ENCODE measurements at regions of chr1 and their contacts with region 1.

Region 1: GRCh38 chr1:28172713-28173150 is 3.8 kb downstream of the PTAFR start:
- DNase-seq: peak; percentile 47
- ATAC-seq: peak; percentile 66
- H3K4me3 Mint-ChIP-seq: peak overlapping the region; percentile 73
- H3K27ac Mint-ChIP-seq: peak overlapping the region; percentile 87
- H3K4me1 Mint-ChIP-seq: peaks cover 90% of the 10 kb centered on the region
- H3K27me3 Mint-ChIP-seq: no peaks in the 10 kb centered on the region
- CTCF ChIP-seq: no peak

Region 2: DNA sequence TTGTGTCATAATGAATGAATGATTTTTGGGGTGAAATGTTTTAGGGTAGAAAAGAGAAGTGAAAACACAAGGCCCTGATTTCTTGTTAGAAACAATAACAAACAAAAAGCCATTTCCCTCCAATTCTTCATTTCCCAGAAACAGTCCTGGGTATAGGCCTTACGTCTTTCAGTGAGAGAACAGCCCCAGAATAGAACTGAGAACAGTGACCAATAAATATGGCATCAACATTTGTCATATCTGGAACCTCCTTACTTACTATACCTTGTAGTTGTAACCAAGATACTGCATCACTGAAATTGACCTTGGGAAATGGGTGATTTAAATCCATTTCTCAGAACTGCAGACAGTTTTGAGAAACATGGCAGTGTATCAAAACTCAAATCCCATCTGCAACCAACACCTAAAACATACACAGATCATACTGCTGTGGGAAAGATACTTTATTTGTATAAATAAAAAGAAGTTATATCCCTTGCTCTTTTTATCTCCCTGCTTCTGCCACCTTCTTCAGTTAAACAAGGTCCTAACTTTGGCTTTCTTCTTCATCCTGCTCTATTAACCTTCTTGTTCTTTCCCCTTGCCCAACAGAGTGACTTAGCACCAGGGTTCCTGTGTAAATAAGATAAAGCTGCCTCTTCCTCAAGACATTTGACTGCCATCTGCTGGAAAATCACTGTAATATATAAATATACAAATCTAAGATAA is 193.4 kb before region 1 on chr1:
- CTCF ChIA-PET with region 1: no interaction called
- POLR2A ChIA-PET with region 1: no interaction called
- intact Hi-C with region 1: no loop called
- DNase-seq: no peak
- ATAC-seq: peak; percentile 68
- H3K4me3 Mint-ChIP-seq: no peak overlapping the region
- H3K27ac Mint-ChIP-seq: no peak overlapping the region
- H3K4me1 Mint-ChIP-seq: peaks cover 2% of the 10 kb centered on the region
- H3K27me3 Mint-ChIP-seq: no peaks in the 10 kb centered on the region
- CTCF ChIP-seq: peak; percentile 70

Region 3: GRCh38 chr1:28111157-28111556 is 61.6 kb before region 1 on chr1:
- CTCF ChIA-PET with region 1: no interaction called
- POLR2A ChIA-PET with region 1: interaction called, 5 read pairs
- intact Hi-C with region 1: loop called (anchors 2 kb)
- DNase-seq: no peak
- ATAC-seq: peak; percentile 80
- H3K4me3 Mint-ChIP-seq: peak overlapping the region; percentile 9
- H3K27ac Mint-ChIP-seq: peak overlapping the region; percentile 57
- H3K4me1 Mint-ChIP-seq: peaks cover 27% of the 10 kb centered on the region
- H3K27me3 Mint-ChIP-seq: no peaks in the 10 kb centered on the region
- CTCF ChIP-seq: no peak

Region 4: GRCh38 chr1:28135371-28136168 is 37.2 kb before region 1 on chr1:
- CTCF ChIA-PET with region 1: no interaction called
- POLR2A ChIA-PET with region 1: interaction called, 5 read pairs
- intact Hi-C with region 1: loop called (anchors 2 kb)
- DNase-seq: no peak
- ATAC-seq: peak; percentile 87
- H3K4me3 Mint-ChIP-seq: peak overlapping the region; percentile 66
- H3K27ac Mint-ChIP-seq: peak overlapping the region; percentile 74
- H3K4me1 Mint-ChIP-seq: peaks cover 63% of the 10 kb centered on the region
- H3K27me3 Mint-ChIP-seq: no peaks in the 10 kb centered on the region
- CTCF ChIP-seq: no peak

Region 5: GRCh38 chr1:28144203-28145135 is 28.3 kb before region 1 on chr1:
- CTCF ChIA-PET with region 1: interaction called, 5 read pairs
- POLR2A ChIA-PET with region 1: interaction called, 30 read pairs
- intact Hi-C with region 1: loop called (anchors 1 kb)
- DNase-seq: no peak
- ATAC-seq: peak; percentile 85
- H3K4me3 Mint-ChIP-seq: peak overlapping the region; percentile 29
- H3K27ac Mint-ChIP-seq: peak overlapping the region; percentile 78
- H3K4me1 Mint-ChIP-seq: peaks cover 49% of the 10 kb centered on the region
- H3K27me3 Mint-ChIP-seq: no peaks in the 10 kb centered on the region
- CTCF ChIP-seq: no peak

Region 6: GRCh38 chr1:28199328-28200233 is 26.8 kb after region 1 on chr1:
- CTCF ChIA-PET with region 1: interaction called, 4 read pairs
- POLR2A ChIA-PET with region 1: interaction called, 5 read pairs
- intact Hi-C with region 1: loop called (anchors 1 kb)
- DNase-seq: no peak
- ATAC-seq: peak; percentile 80
- H3K4me3 Mint-ChIP-seq: no peak overlapping the region
- H3K27ac Mint-ChIP-seq: peak overlapping the region; percentile 80
- H3K4me1 Mint-ChIP-seq: peaks cover 22% of the 10 kb centered on the region
- H3K27me3 Mint-ChIP-seq: no peaks in the 10 kb centered on the region
- CTCF ChIP-seq: no peak

Region 7: DNA sequence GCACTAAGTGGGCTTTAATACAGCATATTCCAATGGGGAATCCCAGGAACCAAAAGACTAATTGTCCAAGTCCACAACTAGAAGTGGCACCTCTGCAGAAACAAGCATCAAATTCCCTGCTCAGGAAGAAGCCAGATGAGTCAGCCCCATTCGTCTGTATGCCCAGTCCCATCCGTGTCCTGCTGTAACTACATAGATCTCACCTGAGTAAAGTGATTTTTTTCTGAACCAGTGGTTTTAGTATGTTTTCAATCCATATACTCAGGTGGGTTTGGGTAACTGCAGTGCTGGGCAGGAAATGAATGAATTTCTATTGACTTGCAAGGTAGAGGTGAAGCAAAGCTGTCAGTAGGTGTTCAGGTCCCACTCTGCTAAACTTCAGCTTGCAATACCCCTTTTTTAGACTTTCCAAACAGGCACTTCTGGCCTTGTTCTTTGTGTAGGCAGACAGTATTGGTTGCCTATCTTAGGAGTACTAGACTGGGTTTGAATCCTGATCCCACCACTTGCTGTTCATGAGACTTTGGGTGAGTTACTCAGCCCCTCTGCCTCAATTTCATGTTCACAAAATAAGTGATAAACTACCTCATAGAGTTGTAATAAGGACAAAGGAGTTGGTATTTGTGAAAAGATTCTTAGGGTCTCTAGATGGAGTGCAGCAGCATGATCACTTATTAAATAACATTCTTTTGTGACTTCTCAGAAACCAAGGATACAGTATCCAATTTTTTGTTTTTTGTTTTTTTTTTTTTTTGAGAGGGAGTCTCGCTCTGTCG is 338.1 kb after region 1 on chr1:
- CTCF ChIA-PET with region 1: no interaction called
- POLR2A ChIA-PET with region 1: interaction called, 13 read pairs
- intact Hi-C with region 1: no loop called
- DNase-seq: no peak
- ATAC-seq: peak; percentile 8
- H3K4me3 Mint-ChIP-seq: peak overlapping the region; percentile 98
- H3K27ac Mint-ChIP-seq: peak overlapping the region; percentile 98
- H3K4me1 Mint-ChIP-seq: peaks cover 44% of the 10 kb centered on the region
- H3K27me3 Mint-ChIP-seq: no peaks in the 10 kb centered on the region
- CTCF ChIP-seq: no peak

Measured in activated B cell treated with CpG ODN at 0.5 μM for 24 hours (primary cell).